ENCODE measurements at regions of chr5 and their contacts with region 1.

Region 1: GRCh38 chr5:135191084-135191826 is 157.2 kb upstream of the PITX1 start:
- DNase-seq: peak; percentile 78 to 92
- H3K4me3 ChIP-seq: peak overlapping the region; percentile 7 to 58 (median 33); a peak in 6 of 8 replicates
- H3K27ac ChIP-seq: no peak overlapping the region
- H3K4me1 ChIP-seq: peaks cover 0 to 3% (median 1%) of the 10 kb centered on the region in 4 experiments; a peak in 1 of 7 replicates
- H3K27me3 ChIP-seq: peaks cover 3 to 21% (median 16%) of the 10 kb centered on the region in 4 experiments; a peak in 6 of 7 replicates
- CTCF ChIP-seq: peak; percentile 94 to 96 (median 94)
- EP300 ChIP-seq: no peak
- POLR2A ChIP-seq: no peak
- RAD21 ChIP-seq: peak; percentile 91 to 94

Region 2: GRCh38 chr5:134917070-134917815 is 274.0 kb before region 1 on chr5:
- CTCF ChIA-PET with region 1: interaction called, 12 read pairs
- POLR2A ChIA-PET with region 1: no interaction called
- DNase-seq: peak in 1 of 2 experiments; percentile 67
- H3K4me3 ChIP-seq: no peak overlapping the region
- H3K27ac ChIP-seq: no peak overlapping the region
- H3K4me1 ChIP-seq: no peaks in the 10 kb centered on the region; a peak in 1 of 7 replicates
- H3K27me3 ChIP-seq: no peaks in the 10 kb centered on the region
- CTCF ChIP-seq: peak; percentile 59 to 68 (median 63)
- EP300 ChIP-seq: no peak
- POLR2A ChIP-seq: no peak
- RAD21 ChIP-seq: peak; percentile 61 to 63

Region 3: DNA sequence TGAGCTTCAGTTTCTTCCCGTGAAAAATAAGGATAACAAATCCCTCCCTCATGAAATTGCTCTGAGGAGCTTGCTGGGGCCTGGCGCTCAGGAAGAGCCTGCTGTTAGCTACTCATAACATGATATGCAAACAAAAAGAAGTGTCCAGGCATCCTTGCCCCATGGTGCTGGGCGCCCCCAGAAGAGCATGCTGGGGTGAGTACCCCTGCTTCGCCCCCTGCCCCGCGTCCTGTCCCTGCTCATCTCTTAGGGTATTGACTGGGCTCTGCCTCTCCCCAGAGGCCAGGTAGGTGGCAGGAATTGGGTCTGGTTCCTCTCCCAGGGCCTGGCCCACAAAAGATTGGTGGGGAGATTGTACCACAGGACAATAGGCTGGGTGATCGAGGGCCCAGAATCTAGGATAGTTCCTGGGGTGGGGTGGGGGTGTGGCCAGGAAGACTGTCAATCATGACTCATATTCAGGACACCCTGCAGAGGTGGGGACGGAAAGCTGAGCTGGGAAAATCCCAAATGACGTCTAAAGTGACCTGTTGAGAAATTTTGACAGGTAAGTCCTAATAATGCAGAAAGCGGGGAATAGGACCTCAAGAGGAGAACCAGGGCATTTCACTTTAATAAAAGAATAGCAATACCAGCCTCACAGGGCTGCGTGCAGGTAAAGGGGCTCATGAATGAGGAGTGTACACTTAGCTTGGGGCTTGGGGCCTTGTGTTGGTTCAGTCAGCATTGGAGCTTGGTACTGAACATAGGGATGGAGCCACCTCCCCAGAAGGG is 166.1 kb before region 1 on chr5:
- CTCF ChIA-PET with region 1: interaction called, 15 read pairs
- POLR2A ChIA-PET with region 1: no interaction called
- DNase-seq: no peak
- H3K4me3 ChIP-seq: no peak overlapping the region
- H3K27ac ChIP-seq: no peak overlapping the region
- H3K4me1 ChIP-seq: peaks cover 0 to 16% (median 13%) of the 10 kb centered on the region in 4 experiments; a peak in 6 of 7 replicates
- H3K27me3 ChIP-seq: peaks cover 43 to 63% (median 59%) of the 10 kb centered on the region in 4 experiments
- CTCF ChIP-seq: no peak
- EP300 ChIP-seq: no peak
- POLR2A ChIP-seq: no peak
- RAD21 ChIP-seq: no peak

Region 4: GRCh38 chr5:135063631-135064570 is 127.4 kb before region 1 on chr5:
- CTCF ChIA-PET with region 1: interaction called, 10 read pairs
- POLR2A ChIA-PET with region 1: no interaction called
- DNase-seq: no peak
- H3K4me3 ChIP-seq: no peak overlapping the region
- H3K27ac ChIP-seq: no peak overlapping the region
- H3K4me1 ChIP-seq: no peaks in the 10 kb centered on the region
- H3K27me3 ChIP-seq: peaks cover 0 to 35% (median 18%) of the 10 kb centered on the region in 4 experiments; a peak in 6 of 7 replicates
- CTCF ChIP-seq: no peak
- EP300 ChIP-seq: no peak
- POLR2A ChIP-seq: no peak
- RAD21 ChIP-seq: no peak

Region 5: GRCh38 chr5:135174315-135175096 is 16.7 kb before region 1 on chr5:
- CTCF ChIA-PET with region 1: interaction called, 25 read pairs
- POLR2A ChIA-PET with region 1: no interaction called
- DNase-seq: peak; percentile 29 to 58
- H3K4me3 ChIP-seq: no peak overlapping the region
- H3K27ac ChIP-seq: no peak overlapping the region
- H3K4me1 ChIP-seq: no peaks in the 10 kb centered on the region; a peak in 1 of 7 replicates
- H3K27me3 ChIP-seq: no peaks in the 10 kb centered on the region; a peak in 3 of 7 replicates
- CTCF ChIP-seq: peak; percentile 82 to 93 (median 88)
- EP300 ChIP-seq: no peak
- POLR2A ChIP-seq: no peak
- RAD21 ChIP-seq: peak; percentile 73 to 87

Region 6: GRCh38 chr5:135203593-135204036 is 12.4 kb after region 1 on chr5:
- CTCF ChIA-PET with region 1: interaction called, 32 read pairs
- POLR2A ChIA-PET with region 1: no interaction called
- DNase-seq: no peak
- H3K4me3 ChIP-seq: no peak overlapping the region
- H3K27ac ChIP-seq: no peak overlapping the region
- H3K4me1 ChIP-seq: peaks cover 0 to 2% (median 0%) of the 10 kb centered on the region in 4 experiments; a peak in 2 of 7 replicates
- H3K27me3 ChIP-seq: no peaks in the 10 kb centered on the region
- CTCF ChIP-seq: peak in 2 of 3 experiments; percentile 44 to 63; a peak in 2 of 4 replicates
- EP300 ChIP-seq: no peak
- POLR2A ChIP-seq: no peak
- RAD21 ChIP-seq: peak; percentile 63 to 64

Region 7: GRCh38 chr5:135214897-135215616 is 23.8 kb after region 1 on chr5:
- CTCF ChIA-PET with region 1: interaction called, 10 read pairs
- POLR2A ChIA-PET with region 1: no interaction called
- DNase-seq: peak in 1 of 2 experiments; percentile 13
- H3K4me3 ChIP-seq: no peak overlapping the region
- H3K27ac ChIP-seq: no peak overlapping the region
- H3K4me1 ChIP-seq: peaks cover 0 to 6% (median 5%) of the 10 kb centered on the region in 4 experiments; a peak in 5 of 7 replicates
- H3K27me3 ChIP-seq: no peaks in the 10 kb centered on the region; a peak in 2 of 7 replicates
- CTCF ChIP-seq: no peak
- EP300 ChIP-seq: no peak
- POLR2A ChIP-seq: no peak
- RAD21 ChIP-seq: no peak

Region 8: GRCh38 chr5:135343413-135343812 is 152.2 kb after region 1 on chr5:
- CTCF ChIA-PET with region 1: no interaction called
- POLR2A ChIA-PET with region 1: no interaction called
- DNase-seq: no peak
- H3K4me3 ChIP-seq: no peak overlapping the region
- H3K27ac ChIP-seq: no peak overlapping the region
- H3K4me1 ChIP-seq: no peaks in the 10 kb centered on the region
- H3K27me3 ChIP-seq: no peaks in the 10 kb centered on the region
- CTCF ChIP-seq: no peak
- EP300 ChIP-seq: no peak
- POLR2A ChIP-seq: no peak
- RAD21 ChIP-seq: no peak

Region 9: DNA sequence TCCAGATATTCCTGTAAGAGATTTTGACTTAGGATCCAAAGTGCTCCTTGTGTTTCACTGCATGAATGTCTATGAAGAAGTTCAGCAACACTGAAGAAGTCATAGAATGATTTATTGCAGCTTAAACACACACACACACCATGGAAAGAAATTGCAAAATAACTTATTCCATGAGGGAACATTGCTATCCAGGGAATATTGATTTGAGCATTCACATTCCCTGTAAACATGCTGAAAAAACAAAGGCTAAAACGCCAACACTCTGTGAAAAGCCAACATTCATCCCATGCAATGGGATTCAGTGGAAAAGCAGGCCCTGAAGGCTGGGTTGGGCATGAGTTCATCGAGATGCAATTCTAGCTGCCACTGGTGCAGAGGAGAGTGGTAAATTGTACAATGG is 497.1 kb after region 1 on chr5:
- CTCF ChIA-PET with region 1: no interaction called
- POLR2A ChIA-PET with region 1: no interaction called
- DNase-seq: no peak
- H3K4me3 ChIP-seq: no peak overlapping the region
- H3K27ac ChIP-seq: no peak overlapping the region
- H3K4me1 ChIP-seq: no peaks in the 10 kb centered on the region; a peak in 1 of 7 replicates
- H3K27me3 ChIP-seq: no peaks in the 10 kb centered on the region
- CTCF ChIP-seq: no peak
- EP300 ChIP-seq: no peak
- POLR2A ChIP-seq: no peak
- RAD21 ChIP-seq: no peak

Region 10: GRCh38 chr5:135944967-135945560 is 753.8 kb after region 1 on chr5:
- CTCF ChIA-PET with region 1: no interaction called
- POLR2A ChIA-PET with region 1: no interaction called
- DNase-seq: no peak
- H3K4me3 ChIP-seq: no peak overlapping the region
- H3K27ac ChIP-seq: no peak overlapping the region
- H3K4me1 ChIP-seq: peaks cover 0 to 1% (median 0%) of the 10 kb centered on the region in 4 experiments; a peak in 1 of 7 replicates
- H3K27me3 ChIP-seq: no peaks in the 10 kb centered on the region
- CTCF ChIP-seq: peak in 2 of 3 experiments; percentile 79 to 80; a peak in 3 of 4 replicates
- EP300 ChIP-seq: no peak
- POLR2A ChIP-seq: no peak
- RAD21 ChIP-seq: peak; percentile 77 to 83

Measured in H1 (cell line).